ENCODE measurements at regions of chr13 and their contacts with region 1.

Region 1: GRCh38 chr13:44815623-44816022 is 173.6 kb downstream of the NUFIP1 start:
- DNase-seq: peak; percentile 54
- H3K4me3 ChIP-seq: no peak overlapping the region
- H3K27ac ChIP-seq: no peak overlapping the region
- H3K4me1 ChIP-seq: peaks cover 29% of the 10 kb centered on the region
- H3K27me3 ChIP-seq: no peaks in the 10 kb centered on the region
- CTCF ChIP-seq: no peak
- POLR2A ChIP-seq: no peak

Region 2: DNA sequence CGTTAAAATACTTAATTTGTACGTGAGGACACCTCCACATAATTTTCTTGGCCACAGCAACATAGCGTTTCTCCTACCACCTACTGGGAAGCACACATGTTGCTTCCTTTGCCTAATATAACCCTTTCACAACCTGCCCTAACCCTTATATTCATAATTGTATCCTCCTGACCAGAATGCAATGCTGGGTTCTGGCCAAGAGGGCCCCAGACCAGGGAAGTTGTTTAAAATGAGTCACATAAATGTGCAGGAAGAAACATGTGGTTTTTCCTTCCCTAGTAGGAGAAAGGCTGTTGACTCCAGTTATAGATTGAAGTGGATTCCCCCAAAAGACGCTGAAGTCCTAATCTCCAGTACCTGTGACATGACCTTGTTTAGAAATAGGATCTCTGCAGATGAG is 13.6 kb before region 1 on chr13:
- CTCF ChIA-PET with region 1: interaction called, 10 read pairs
- POLR2A ChIA-PET with region 1: no interaction called
- dilution Hi-C with region 1: no loop called
- intact Hi-C with region 1: no loop called
- DNase-seq: peak; percentile 92
- H3K4me3 ChIP-seq: no peak overlapping the region
- H3K27ac ChIP-seq: no peak overlapping the region
- H3K4me1 ChIP-seq: peaks cover 20% of the 10 kb centered on the region
- H3K27me3 ChIP-seq: no peaks in the 10 kb centered on the region
- CTCF ChIP-seq: no peak
- POLR2A ChIP-seq: no peak